ENCODE measurements at regions of chr17 and their contacts with region 1.

Region 1: GRCh38 chr17:78040440-78041385 is 82.2 kb downstream of the TNRC6C start:
- DNase-seq: peak; percentile 68 to 88
- ATAC-seq: peak; percentile 85 to 88 (median 87)
- H3K4me3 ChIP-seq: peak overlapping the region; percentile 71
- H3K27ac ChIP-seq: peak overlapping the region; percentile 91
- H3K4me1 ChIP-seq: peaks cover 42% of the 10 kb centered on the region
- H3K27me3 ChIP-seq: no peaks in the 10 kb centered on the region
- CTCF ChIP-seq: no peak

Region 2: GRCh38 chr17:78019367-78019975 is 21.2 kb before region 1 on chr17:
- intact Hi-C with region 1: no loop called
- DNase-seq: no peak
- ATAC-seq: peak in 2 of 4 donors; percentile 41 to 65
- H3K4me3 ChIP-seq: no peak overlapping the region
- H3K27ac ChIP-seq: peak overlapping the region; percentile 62
- H3K4me1 ChIP-seq: peaks cover 21% of the 10 kb centered on the region
- H3K27me3 ChIP-seq: no peaks in the 10 kb centered on the region
- CTCF ChIP-seq: peak; percentile 71

Region 3: GRCh38 chr17:78058001-78058400 is 17.3 kb after region 1 on chr17:
- intact Hi-C with region 1: loop called in 1 of 2 experiments (anchors 2 kb)
- DNase-seq: no peak
- ATAC-seq: peak; percentile 37 to 68 (median 67)
- H3K4me3 ChIP-seq: peak overlapping the region; percentile 47
- H3K27ac ChIP-seq: peak overlapping the region; percentile 96
- H3K4me1 ChIP-seq: peaks cover 62% of the 10 kb centered on the region
- H3K27me3 ChIP-seq: no peaks in the 10 kb centered on the region
- CTCF ChIP-seq: no peak